Activated T-helper 2 cell treated with anti-CD3 and anti-CD28 coated beads, Interferon-gamma antibody, Interleukin-2, Interleukin-4, amounts not matched to agents 10 μg/mL and 5 μg/mL and 100 μg/mL, durations not matched to agents 14 hours and 24 hours and 36 hours (primary cell): ENCODE measurements at regions of chr3 and their contacts with region 1.

Region 1: DNA sequence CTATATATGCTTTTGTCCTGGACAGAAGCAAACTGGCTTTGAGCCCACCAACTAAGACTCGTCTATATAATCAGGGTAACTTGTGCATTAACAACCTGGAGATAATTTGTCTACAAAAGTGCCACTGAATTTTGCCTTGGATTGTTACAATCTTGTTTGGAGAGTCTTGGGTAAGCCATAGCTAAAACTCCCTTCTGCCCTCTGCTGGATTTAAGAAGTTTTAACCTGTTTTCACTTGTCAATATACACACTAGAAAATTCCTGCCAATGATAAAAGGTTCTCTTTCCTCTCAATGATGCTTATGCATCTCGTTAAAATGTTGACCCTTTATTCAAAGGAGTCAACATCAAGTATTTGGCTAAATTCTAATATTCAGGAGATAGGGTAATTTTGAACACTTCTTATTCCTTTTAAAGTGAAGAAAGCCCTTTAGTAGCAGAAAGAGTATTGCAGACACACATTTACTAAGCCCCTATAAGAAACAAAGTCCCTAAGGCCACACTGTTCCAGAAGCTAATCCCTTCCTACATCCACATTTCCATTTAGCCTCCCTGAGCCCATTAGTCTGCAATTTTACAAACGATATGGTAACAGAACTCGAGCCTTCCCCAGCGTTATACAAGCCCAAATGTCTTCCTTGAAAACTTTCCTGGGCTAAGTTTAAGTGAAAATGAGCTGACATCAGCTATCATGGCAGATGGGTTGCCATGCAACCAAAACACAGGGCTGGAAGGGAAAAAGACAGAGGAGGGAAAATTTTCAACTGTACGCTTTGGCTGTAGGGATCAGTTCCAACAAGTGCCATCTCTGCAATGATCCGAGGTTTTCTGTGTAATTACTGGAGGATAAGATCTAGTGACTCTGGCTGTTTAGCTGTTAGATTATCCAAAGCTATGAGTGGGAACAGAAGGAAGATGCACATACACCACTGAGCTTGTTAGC is 75.9 kb upstream of the FGF12 start:
- DNase-seq: no peak
- H3K4me3 Mint-ChIP-seq: no peak overlapping the region
- H3K27ac Mint-ChIP-seq: no peak overlapping the region
- H3K4me1 Mint-ChIP-seq: peaks cover 9% of the 10 kb centered on the region
- H3K27me3 Mint-ChIP-seq: no peaks in the 10 kb centered on the region

Region 2: DNA sequence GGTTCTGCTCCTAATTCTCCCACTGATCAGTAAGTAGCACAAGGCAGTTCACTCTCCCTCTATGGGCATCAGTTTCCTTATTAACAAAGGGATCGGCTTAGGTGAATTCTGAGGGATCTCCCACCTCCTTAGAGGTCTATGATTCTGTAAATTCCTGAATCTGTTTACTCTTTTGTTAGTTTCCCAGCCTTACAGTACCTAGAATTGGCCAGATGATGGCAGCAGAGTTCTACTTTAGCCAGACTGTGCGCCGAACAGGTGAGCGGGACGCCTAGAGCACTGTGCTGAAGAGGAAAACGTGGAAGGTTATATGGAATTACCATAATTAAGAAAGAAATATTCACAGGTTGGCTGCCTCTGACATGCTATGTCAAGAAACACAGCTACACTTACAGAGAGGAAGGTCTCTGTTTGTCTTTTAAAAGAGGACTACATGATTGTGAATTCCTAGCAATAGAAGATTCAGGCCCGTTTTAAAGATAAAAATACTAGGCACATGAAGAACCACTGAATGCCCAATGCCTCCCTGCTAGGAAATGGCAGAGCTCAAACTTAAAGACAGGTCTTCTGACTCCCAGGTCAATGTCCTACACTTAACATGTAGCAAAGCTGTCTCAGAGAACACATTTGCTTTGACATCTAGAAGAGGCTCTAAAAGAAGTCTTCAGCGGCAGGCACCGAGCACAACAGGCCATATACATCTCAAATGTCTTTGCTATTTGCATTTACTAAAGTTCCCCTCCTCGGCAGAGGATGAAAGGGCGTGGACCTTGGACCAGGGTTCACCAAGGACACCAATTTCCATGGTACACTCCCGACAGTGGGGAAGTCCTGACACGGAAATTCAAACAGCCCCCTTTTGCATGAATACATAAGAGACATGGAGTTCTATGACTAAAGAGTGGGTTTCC is 335.7 kb before region 1 on chr3:
- intact Hi-C with region 1: loop called (anchors 2 kb)
- DNase-seq: no peak
- H3K4me3 Mint-ChIP-seq: no peak overlapping the region
- H3K27ac Mint-ChIP-seq: no peak overlapping the region
- H3K4me1 Mint-ChIP-seq: peaks cover 2% of the 10 kb centered on the region
- H3K27me3 Mint-ChIP-seq: peaks cover 8% of the 10 kb centered on the region

Region 3: DNA sequence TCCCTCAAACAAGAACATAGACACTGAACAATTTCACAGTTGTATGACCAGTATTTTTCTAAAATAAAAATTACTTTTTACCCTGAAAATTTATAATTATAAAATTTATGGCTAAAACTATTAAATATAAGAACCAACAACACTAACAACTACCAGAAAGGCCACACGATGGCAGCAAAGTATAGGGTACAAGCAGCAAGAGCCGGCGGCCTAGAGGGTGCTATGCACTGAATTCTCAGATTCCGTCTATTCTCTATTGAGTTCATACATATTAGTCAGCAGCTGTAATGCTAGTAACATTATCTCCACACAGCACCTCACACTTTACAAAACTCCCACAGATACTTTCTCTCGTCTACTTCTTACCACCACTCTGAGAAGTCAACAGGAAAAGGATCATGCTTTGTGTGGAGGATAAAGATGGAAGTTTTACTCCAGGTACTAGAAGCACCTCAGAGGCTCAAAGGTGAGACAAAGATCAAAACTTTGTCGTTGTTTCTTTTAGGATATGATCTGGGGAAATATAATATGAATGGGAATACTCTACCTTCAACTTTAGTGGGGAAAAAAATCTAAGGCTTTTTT is 236.4 kb before region 1 on chr3:
- intact Hi-C with region 1: loop called (anchors 1 kb)
- DNase-seq: peak; percentile 31
- H3K4me3 Mint-ChIP-seq: no peak overlapping the region
- H3K27ac Mint-ChIP-seq: no peak overlapping the region
- H3K4me1 Mint-ChIP-seq: no peaks in the 10 kb centered on the region
- H3K27me3 Mint-ChIP-seq: peaks cover 11% of the 10 kb centered on the region

Region 4: DNA sequence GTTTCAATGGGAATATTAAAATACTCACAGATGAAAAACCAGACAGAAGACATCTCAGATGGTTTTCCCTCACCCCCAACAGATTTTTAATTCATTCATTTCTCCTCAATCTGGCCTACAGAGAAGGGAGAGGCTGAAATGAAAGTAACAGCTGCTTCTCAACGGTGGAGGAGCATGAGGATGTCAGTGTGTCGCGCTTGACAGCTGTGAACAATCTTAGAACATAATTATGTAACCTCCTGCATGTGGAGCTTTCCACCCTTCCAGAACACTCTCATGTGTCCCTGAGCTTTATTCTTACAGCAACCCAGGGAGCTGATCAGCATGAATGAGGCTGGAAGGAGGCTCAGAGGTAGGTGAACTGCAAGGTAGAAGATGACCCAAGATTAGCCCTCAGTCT is 61.7 kb after region 1 on chr3:
- intact Hi-C with region 1: no loop called
- DNase-seq: no peak
- H3K4me3 Mint-ChIP-seq: no peak overlapping the region
- H3K27ac Mint-ChIP-seq: no peak overlapping the region
- H3K4me1 Mint-ChIP-seq: peaks cover 17% of the 10 kb centered on the region
- H3K27me3 Mint-ChIP-seq: no peaks in the 10 kb centered on the region